Calu3 (cell line): ENCODE measurements at regions of chr4 and their contacts with region 1.

Region 1: DNA sequence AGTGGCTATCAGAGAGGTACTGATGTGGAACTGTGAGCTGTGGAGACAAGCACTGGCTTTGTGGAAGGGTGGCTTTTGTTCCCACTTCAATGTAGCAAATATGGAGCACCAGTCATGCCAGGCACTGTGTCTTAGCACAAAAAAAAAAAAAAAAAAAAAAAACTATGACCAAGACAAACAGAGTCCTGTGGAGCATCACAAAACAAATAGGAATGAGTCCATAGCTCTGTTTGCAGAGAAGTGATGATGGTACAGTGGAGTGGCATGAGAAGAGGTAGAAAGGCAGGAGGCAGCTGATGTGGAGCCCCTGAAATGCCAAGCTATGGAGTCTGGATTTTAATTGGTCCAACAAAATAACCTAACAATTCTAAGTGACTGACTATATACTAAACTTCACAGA is 116.9 kb downstream of the RAB28 start:
- DNase-seq: no peak
- H3K4me3 Mint-ChIP-seq: no peak overlapping the region
- H3K27ac Mint-ChIP-seq: no peak overlapping the region
- H3K4me1 Mint-ChIP-seq: no peaks in the 10 kb centered on the region
- H3K27me3 Mint-ChIP-seq: no peaks in the 10 kb centered on the region
- CTCF ChIP-seq: no peak

Region 2: GRCh38 chr4:12562021-12562420 is 805.2 kb before region 1 on chr4:
- CTCF ChIA-PET with region 1: interaction called, 10 read pairs
- intact Hi-C with region 1: no loop called
- DNase-seq: no peak
- H3K4me3 Mint-ChIP-seq: no peak overlapping the region
- H3K27ac Mint-ChIP-seq: no peak overlapping the region
- H3K4me1 Mint-ChIP-seq: no peaks in the 10 kb centered on the region
- H3K27me3 Mint-ChIP-seq: no peaks in the 10 kb centered on the region
- CTCF ChIP-seq: no peak

Region 3: GRCh38 chr4:13322681-13323101 is 44.6 kb before region 1 on chr4:
- CTCF ChIA-PET with region 1: no interaction called
- intact Hi-C with region 1: no loop called
- DNase-seq: no peak
- H3K4me3 Mint-ChIP-seq: no peak overlapping the region
- H3K27ac Mint-ChIP-seq: no peak overlapping the region
- H3K4me1 Mint-ChIP-seq: no peaks in the 10 kb centered on the region
- H3K27me3 Mint-ChIP-seq: no peaks in the 10 kb centered on the region
- CTCF ChIP-seq: no peak